WTC11 (cell line): ENCODE measurements at regions of chr7 and their contacts with region 1.

Region 1: GRCh38 chr7:95295399-95295798 is 28.9 kb downstream of the PON1 start:
- DNase-seq: no peak
- ATAC-seq: no peak
- H3K4me3 Mint-ChIP-seq: no peak overlapping the region
- H3K27ac Mint-ChIP-seq: no peak overlapping the region
- H3K4me1 Mint-ChIP-seq: peaks cover 8% of the 10 kb centered on the region
- H3K27me3 Mint-ChIP-seq: no peaks in the 10 kb centered on the region
- CTCF ChIP-seq: no peak

Region 2: DNA sequence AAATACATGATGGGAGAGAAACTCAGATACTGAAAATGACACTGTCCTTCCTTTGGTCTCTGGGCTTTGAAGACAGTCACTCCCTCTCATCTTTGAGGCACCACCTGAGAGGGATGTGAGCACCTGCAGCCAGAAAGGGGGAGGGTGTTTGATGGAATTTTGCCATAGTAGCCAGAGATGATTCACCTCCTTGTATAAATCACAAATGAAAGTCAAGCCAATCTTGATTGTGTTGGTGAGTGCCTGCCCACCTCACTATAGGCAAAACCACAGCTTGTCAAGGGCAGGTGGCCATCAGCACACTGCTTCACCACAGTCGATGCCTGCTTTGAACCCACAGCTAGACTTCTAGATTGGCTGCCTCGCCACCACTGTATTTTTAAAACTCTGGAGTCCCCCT is 19.3 kb before region 1 on chr7:
- CTCF ChIA-PET with region 1: no interaction called
- POLR2A ChIA-PET with region 1: interaction called, 11 read pairs
- DNase-seq: no peak
- ATAC-seq: no peak
- H3K4me3 Mint-ChIP-seq: no peak overlapping the region
- H3K27ac Mint-ChIP-seq: no peak overlapping the region
- H3K4me1 Mint-ChIP-seq: no peaks in the 10 kb centered on the region
- H3K27me3 Mint-ChIP-seq: no peaks in the 10 kb centered on the region
- CTCF ChIP-seq: no peak

Region 3: GRCh38 chr7:95309951-95310350 is 14.6 kb after region 1 on chr7:
- CTCF ChIA-PET with region 1: no interaction called
- POLR2A ChIA-PET with region 1: no interaction called
- DNase-seq: no peak
- ATAC-seq: no peak
- H3K4me3 Mint-ChIP-seq: no peak overlapping the region
- H3K27ac Mint-ChIP-seq: no peak overlapping the region
- H3K4me1 Mint-ChIP-seq: peaks cover 3% of the 10 kb centered on the region; the same call in 1 of the 2 replicates
- H3K27me3 Mint-ChIP-seq: no peaks in the 10 kb centered on the region; the same call in 1 of the 2 replicates
- CTCF ChIP-seq: no peak